H1 (cell line): ENCODE measurements at regions of chr4 and their contacts with region 1.

Region 1: DNA sequence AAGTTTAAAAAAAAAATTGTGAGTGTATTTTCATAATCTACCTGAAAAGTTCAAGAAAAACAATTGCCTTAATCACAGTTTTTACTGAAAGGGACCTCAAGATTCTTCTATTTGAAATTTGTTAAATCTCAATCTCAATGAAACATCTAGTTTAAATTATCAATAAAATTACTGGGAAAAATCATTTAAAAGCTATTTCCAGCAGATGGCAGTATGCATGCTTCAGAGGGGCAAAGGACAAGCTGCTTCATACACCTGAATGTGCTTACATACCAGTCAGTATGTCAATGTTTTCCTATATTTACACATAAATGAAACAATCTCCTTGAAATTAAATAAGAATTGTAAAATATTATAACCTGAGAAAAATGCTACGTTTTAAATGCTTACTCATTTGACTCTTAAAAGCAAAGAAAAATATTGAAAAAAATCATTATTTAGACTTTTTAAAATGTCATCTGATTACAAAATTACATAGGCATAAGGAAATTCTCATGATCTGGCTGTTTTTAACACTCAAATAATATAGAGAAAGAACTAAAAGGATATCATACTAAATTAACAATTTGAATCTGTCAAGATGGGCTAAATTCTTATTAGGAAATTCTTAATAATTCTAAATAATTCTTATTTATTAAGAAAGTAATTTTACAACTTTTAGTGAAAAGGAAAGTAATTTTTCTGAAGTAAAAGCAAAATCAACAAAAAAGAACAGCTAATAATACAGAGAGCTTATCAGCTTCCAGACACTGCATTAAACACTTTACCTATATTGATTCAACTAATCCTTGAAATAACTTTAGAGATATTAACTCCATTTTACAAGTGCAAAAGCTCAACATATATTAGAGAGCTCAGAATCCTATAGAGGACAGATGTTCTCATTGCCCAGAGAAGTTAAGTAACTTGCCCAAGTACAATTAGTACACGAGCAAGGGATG is 242.1 kb downstream of the ADAMTS3 start:
- DNase-seq: no peak
- H3K4me3 ChIP-seq: no peak overlapping the region
- H3K27ac ChIP-seq: no peak overlapping the region
- H3K4me1 ChIP-seq: no peaks in the 10 kb centered on the region
- H3K27me3 ChIP-seq: no peaks in the 10 kb centered on the region
- CTCF ChIP-seq: peak in 2 of 3 experiments; percentile 41 to 49; a peak in 2 of 4 replicates
- EP300 ChIP-seq: no peak
- POLR2A ChIP-seq: no peak
- RAD21 ChIP-seq: peak; percentile 66 to 76

Region 2: DNA sequence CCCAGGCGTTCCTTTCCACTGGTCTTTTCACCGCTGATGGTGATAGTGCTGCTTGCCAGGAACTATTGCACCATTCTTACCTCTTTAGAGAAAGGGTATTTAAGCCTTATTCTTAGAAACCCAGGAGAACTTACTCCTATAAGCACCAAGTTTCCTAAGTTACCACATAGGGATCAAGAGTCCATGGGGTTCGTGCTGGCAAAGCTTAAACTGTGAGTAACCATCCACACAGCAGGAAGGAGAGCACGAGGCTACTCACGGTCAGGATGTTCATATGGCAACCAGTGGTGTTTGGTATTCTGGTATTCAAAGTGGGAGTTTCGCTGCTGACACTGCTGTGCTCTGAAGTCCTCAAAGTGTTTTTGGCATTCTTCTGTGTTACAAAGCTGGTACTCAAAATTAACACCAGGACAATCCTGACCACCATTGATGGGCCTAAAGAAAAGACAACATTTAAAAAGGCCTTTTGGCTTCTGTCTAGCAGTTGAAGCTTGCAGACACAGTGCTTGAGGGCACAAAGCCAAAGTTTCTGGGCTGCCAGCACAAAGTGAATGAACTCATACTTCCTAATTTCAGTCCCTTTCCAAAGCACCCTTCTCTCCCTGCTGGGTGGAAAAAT is 14.8 kb before region 1 on chr4:
- CTCF ChIA-PET with region 1: interaction called, 29 read pairs
- POLR2A ChIA-PET with region 1: no interaction called
- DNase-seq: no peak
- H3K4me3 ChIP-seq: no peak overlapping the region
- H3K27ac ChIP-seq: 0 out of 2 replicates have a peak overlapping the region, but pooled peaks have one; percentile 5
- H3K4me1 ChIP-seq: peaks cover 0 to 7% (median 0%) of the 10 kb centered on the region in 4 experiments; a peak in 1 of 7 replicates
- H3K27me3 ChIP-seq: no peaks in the 10 kb centered on the region
- CTCF ChIP-seq: no peak
- EP300 ChIP-seq: no peak
- POLR2A ChIP-seq: no peak
- RAD21 ChIP-seq: no peak

Region 3: GRCh38 chr4:72340803-72341431 is 14.0 kb after region 1 on chr4:
- CTCF ChIA-PET with region 1: interaction called, 38 read pairs
- POLR2A ChIA-PET with region 1: no interaction called
- DNase-seq: no peak
- H3K4me3 ChIP-seq: no peak overlapping the region
- H3K27ac ChIP-seq: no peak overlapping the region
- H3K4me1 ChIP-seq: no peaks in the 10 kb centered on the region
- H3K27me3 ChIP-seq: no peaks in the 10 kb centered on the region
- CTCF ChIP-seq: no peak
- EP300 ChIP-seq: no peak
- POLR2A ChIP-seq: no peak
- RAD21 ChIP-seq: no peak

Region 4: DNA sequence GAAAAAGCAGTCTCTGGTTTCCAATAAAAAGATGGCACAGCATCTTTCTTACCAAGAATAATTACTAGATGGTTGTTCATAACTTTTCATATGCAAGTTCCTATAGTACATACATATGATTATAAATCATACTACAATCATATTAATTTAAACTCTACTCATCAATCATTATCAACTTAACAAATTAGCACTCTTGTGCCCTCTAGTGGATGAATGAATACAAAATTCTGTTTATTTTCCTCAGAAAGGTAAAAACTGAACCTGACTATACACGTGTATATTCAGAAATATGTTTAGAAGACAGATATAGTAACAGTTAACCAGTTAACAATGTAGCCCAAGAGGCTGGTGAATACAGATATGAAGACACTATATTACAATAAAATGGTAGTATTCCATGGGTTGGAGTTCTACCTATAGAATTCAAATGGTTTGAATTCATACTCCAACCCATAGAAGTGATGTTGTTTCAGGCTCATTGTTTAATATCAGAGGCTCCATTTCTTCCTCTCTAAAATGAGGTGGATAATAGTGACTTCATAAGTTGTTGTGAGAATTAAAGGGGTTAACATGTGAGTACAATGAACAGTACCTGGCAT is 142.0 kb after region 1 on chr4:
- CTCF ChIA-PET with region 1: interaction called, 15 read pairs
- POLR2A ChIA-PET with region 1: no interaction called
- DNase-seq: no peak
- H3K4me3 ChIP-seq: no peak overlapping the region
- H3K27ac ChIP-seq: no peak overlapping the region
- H3K4me1 ChIP-seq: no peaks in the 10 kb centered on the region
- H3K27me3 ChIP-seq: no peaks in the 10 kb centered on the region
- CTCF ChIP-seq: no peak; a peak in 1 of 4 replicates
- EP300 ChIP-seq: no peak
- POLR2A ChIP-seq: no peak
- RAD21 ChIP-seq: peak in 1 of 2 experiments; percentile 33; a peak in 2 of 4 replicates